Activated B cell treated with CpG ODN at 0.5 μM for 24 hours (primary cell): ENCODE measurements at regions of chr1 and their contacts with region 1.

Region 1: GRCh38 chr1:21176586-21177555 is at the start of gene EIF4G3:
- DNase-seq: peak; percentile 99
- ATAC-seq: peak; percentile 96
- H3K4me3 Mint-ChIP-seq: peak within 1 kb of the TSS; percentile 91
- H3K27ac Mint-ChIP-seq: peak within 1 kb of the TSS; percentile 92
- H3K4me1 Mint-ChIP-seq: peaks cover 24% of the 10 kb centered on the region
- H3K27me3 Mint-ChIP-seq: no peaks in the 10 kb centered on the region
- CTCF ChIP-seq: no peak
- total RNA-seq, gene EIF4G3: 68.4 and 81.3 TPM in 2 replicates

Region 2: DNA sequence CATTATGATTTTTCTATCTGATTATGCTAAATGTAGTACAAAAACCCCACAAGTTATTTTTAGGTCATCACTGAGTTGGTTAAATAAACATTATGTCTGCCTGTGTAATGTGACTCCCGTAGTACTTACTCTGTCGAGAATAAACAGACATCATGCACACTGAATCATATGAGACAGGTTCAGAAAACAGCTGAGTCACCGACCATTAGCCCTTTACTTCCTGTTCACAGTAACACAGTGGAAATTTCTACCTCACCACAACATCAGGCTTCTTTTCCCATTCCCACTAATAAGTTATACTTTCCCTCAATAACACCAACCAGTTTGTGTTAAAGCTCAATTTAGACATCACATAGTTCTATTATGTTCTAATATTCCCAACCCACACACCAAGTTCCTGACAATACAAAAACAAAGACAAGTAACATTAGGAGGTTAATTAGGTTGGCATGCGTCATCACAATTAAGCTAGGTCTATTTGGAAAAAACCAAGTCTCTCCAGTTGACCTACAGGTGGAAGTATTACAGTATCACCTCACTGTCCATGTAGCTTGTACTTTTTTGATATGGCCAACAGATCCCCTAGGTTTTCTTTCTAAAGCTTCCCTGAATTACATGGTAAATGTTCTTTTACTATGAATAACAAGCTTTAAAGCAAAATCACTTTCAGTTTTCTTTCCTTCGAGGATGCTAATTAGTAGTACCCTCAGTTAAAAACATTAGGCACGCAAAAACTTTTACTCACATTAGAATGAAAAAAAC is 154.4 kb before region 1 on chr1:
- CTCF ChIA-PET with region 1: no interaction called
- POLR2A ChIA-PET with region 1: interaction called, 4 read pairs
- intact Hi-C with region 1: loop called (anchors 5 kb)
- DNase-seq: no peak
- ATAC-seq: peak; percentile 91
- H3K4me3 Mint-ChIP-seq: peak overlapping the region; percentile 70
- H3K27ac Mint-ChIP-seq: peak overlapping the region; percentile 88
- H3K4me1 Mint-ChIP-seq: peaks cover 23% of the 10 kb centered on the region
- H3K27me3 Mint-ChIP-seq: no peaks in the 10 kb centered on the region
- CTCF ChIP-seq: no peak

Region 3: DNA sequence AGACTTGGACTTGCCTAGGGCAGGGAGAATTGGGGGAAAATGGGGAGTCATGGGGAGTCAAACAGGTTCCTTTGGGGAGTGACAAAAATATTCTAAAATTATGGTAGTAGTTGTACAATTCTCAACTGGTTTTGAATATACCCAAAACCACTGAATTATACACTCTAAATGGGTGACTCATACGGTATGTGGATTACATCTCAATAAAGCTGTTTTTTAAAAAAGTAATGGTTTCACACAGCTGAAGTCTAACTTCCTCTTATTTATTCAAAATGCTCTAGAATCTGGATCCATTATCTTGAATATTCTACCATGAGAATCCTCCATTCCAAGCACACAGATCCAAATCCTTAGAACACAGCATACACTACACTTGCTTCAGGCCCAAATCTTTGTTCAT is 11.2 kb before region 1 on chr1:
- CTCF ChIA-PET with region 1: no interaction called
- POLR2A ChIA-PET with region 1: interaction called, 3 read pairs
- intact Hi-C with region 1: loop called (anchors 1 kb)
- DNase-seq: no peak
- ATAC-seq: peak; percentile 75
- H3K4me3 Mint-ChIP-seq: peak overlapping the region; percentile 17
- H3K27ac Mint-ChIP-seq: peak overlapping the region; percentile 92
- H3K4me1 Mint-ChIP-seq: peaks cover 26% of the 10 kb centered on the region
- H3K27me3 Mint-ChIP-seq: no peaks in the 10 kb centered on the region
- CTCF ChIP-seq: no peak

Region 4: GRCh38 chr1:21216835-21217811 is 40.3 kb after region 1 on chr1:
- CTCF ChIA-PET with region 1: no interaction called
- POLR2A ChIA-PET with region 1: no interaction called
- intact Hi-C with region 1: no loop called
- DNase-seq: peak; percentile 45
- ATAC-seq: peak; percentile 76
- H3K4me3 Mint-ChIP-seq: no peak overlapping the region
- H3K27ac Mint-ChIP-seq: peak overlapping the region; percentile 53
- H3K4me1 Mint-ChIP-seq: peaks cover 4% of the 10 kb centered on the region
- H3K27me3 Mint-ChIP-seq: no peaks in the 10 kb centered on the region
- CTCF ChIP-seq: peak; percentile 15